Prostate gland (tissue), 2 donors: ENCODE measurements at regions of chr11 and their contacts with region 1.

Region 1: DNA sequence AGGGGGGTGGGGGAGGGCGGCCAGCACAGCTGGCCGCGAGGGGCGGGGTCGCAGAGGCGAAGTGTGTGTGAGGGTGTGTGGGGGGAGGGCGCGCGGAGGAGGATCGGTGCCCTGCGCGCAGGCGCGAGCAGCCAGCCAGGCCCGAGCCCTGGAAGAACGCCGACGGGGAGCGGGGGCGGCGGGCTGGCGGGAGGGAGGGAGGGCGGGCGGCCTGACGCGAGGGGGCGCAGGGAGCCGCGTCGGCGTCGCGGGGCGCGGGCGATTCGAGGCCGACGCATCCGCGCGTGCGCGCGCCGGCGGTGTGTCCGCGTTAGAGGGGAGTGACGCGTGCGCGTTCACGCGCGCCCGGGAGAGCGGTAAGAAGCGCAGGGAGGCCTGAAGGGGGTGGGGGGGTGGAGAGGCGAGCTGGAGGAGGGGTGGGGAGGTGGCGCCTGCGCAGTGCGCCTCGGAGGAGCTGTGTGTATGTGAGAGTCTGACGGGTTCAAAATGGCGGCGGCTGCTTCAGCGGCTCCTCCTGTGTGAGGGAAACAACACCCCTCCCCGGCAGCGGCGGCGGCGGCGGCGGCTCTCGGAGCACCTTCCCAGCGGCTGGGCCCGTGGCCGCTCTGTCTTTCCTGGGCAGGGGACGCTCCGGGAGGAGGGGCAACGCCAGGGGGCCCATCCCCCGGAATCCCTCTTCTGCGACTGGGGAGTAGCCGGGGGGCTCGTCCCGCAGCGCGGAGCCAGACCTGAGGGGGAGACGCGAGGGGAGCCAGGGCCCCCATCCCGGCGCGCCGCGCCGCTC is at the start of gene KDM2A:
- DNase-seq: peak; percentile 99
- H3K4me3 ChIP-seq: peak within 1 kb of the TSS; percentile 94 to 97
- H3K27ac ChIP-seq: peak within 1 kb of the TSS; percentile 98 to 99
- H3K4me1 ChIP-seq: peaks cover 3% of the 10 kb centered on the region
- H3K27me3 ChIP-seq: no peaks in the 10 kb centered on the region
- CTCF ChIP-seq: peak in 3 of 4 experiments; percentile 49 to 57 (median 52)
- POLR2A ChIP-seq: peak; percentile 87
- total RNA-seq, gene KDM2A: 50.3 to 97.6 TPM

Region 2: DNA sequence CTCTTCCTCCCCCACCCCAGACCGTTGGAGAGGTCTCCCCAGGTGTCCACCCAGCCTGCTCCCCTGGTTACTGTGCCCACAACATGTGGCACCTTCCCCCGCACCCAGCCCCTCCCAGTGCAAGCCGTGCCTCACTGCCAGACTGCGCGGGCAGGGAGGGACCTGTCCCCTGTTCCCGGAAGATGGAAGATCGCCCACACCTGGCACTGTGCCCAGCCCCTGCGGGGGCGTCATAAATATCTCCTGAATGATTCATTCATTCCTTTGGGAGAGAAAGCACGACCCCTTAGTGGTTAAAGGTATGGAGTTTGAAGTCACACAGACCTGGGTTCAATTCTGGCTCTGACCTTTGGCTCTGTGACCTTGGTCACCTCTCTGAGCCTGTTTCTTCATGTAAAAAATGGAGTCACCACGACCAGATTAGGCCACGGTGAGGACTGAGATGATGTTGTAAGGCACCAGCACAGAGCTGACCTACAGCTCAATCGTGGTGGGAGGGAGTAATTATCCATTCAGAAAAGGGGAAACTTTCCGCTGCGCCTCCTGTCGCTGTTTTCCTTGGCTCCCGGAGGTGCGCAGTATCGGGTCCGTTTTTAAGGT is 96.6 kb before region 1 on chr11:
- intact Hi-C with region 1: no loop called
- DNase-seq: peak; percentile 73
- H3K4me3 ChIP-seq: peak overlapping the region; percentile 28 to 43
- H3K27ac ChIP-seq: no peak overlapping the region
- H3K4me1 ChIP-seq: no peaks in the 10 kb centered on the region
- H3K27me3 ChIP-seq: no peaks in the 10 kb centered on the region
- CTCF ChIP-seq: no peak
- POLR2A ChIP-seq: no peak

Region 3: DNA sequence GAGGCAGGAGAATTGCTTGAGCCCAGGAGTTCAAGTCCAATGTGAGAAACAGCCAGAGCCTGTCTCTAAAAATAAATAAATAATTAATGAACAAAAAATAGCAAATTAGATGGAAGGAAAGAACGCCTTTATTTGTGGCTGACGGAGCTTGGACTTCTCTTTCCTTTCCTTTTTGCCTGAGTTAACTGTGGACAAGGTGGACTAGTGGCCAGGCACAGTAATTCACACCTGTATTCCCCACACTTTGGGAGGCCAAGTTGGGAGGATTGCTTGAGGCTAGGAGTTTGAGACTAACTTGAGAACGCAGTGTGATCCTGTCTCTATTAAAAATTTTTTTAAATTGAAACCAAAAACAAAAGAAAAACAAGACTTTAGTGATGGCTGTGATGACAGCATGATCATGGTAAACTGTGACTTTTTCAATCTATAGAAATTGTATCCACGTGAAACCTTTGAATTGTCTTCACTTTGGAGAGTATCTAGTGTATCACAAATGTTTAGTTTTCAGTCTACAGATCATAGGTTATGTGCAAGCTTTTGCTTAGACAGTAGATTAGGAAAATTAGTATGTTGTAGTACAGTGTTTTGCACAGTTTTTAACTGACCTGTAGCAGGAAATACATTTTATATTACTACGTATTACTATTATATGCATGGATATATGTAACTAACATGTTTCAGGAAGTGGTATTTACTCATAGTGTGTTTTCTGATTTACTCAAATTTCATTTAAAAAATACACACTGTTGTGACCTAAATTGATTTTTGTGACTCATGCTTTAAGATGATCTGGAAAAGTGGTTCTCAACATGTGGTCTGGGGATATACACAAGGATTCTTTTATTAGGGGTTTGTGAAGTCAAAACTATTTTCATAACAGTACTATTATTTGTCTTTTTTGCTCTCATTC is 42.1 kb after region 1 on chr11:
- intact Hi-C with region 1: loop called (anchors 5 kb)
- DNase-seq: no peak
- H3K4me3 ChIP-seq: no peak overlapping the region
- H3K27ac ChIP-seq: no peak overlapping the region
- H3K4me1 ChIP-seq: no peaks in the 10 kb centered on the region
- H3K27me3 ChIP-seq: no peaks in the 10 kb centered on the region
- CTCF ChIP-seq: no peak
- POLR2A ChIP-seq: no peak

Region 4: GRCh38 chr11:67239783-67240575 is 121.0 kb after region 1 on chr11:
- intact Hi-C with region 1: loop called (anchors 5 kb)
- DNase-seq: peak; percentile 99
- H3K4me3 ChIP-seq: peak overlapping the region; percentile 49 to 51
- H3K27ac ChIP-seq: peak overlapping the region; percentile 85 to 86
- H3K4me1 ChIP-seq: peaks cover 21% of the 10 kb centered on the region
- H3K27me3 ChIP-seq: no peaks in the 10 kb centered on the region
- CTCF ChIP-seq: peak in 2 of 4 experiments; percentile 44 to 52
- POLR2A ChIP-seq: peak; percentile 98

Region 5: DNA sequence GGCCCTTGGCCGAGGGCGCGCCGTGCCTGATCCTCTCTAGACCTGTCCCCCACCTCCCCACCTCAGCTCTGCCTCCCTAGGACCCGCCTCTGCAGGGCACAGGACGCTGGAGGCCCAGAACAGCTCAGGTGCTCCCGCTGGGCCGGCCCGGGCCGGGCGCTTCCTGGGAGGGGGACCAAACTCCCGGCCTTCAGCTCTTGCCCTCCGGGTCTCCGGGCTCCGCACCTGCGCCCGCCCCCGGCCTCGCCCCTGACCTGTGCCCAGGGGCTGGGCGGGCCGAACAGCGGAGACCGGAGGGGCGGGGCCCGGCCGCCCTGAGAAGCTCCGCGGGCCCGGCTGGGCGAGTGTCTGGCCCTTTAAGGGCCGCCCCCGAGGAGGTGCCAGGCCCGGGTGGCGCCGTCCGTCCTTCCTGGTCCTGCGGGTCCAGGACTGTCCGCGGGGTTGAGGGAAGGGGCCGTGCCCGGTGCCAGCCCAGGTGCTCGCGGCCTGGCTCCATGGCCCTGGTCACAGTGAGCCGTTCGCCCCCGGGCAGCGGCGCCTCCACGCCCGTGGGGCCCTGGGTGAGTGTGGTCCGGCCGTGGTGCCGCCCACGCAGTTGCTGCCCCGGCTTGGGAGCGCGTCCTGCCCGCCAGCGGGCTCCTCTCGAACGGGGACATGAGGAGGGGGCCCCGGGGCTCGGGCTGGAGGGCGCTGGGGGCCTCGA is 184.3 kb after region 1 on chr11 and contains the start of gene SSH3:
- intact Hi-C with region 1: no loop called
- DNase-seq: peak; percentile 81
- H3K4me3 ChIP-seq: peak within 1 kb of the TSS; percentile 85 to 97
- H3K27ac ChIP-seq: peak within 1 kb of the TSS; percentile 89 to 91
- H3K4me1 ChIP-seq: peaks cover 13% of the 10 kb centered on the region
- H3K27me3 ChIP-seq: no peaks in the 10 kb centered on the region
- CTCF ChIP-seq: no peak
- POLR2A ChIP-seq: peak; percentile 90
- total RNA-seq, gene SSH3: 70.9 to 101 TPM